GM13977 (cell line): ENCODE measurements at regions of chr19 and their contacts with region 1.

Region 1: DNA sequence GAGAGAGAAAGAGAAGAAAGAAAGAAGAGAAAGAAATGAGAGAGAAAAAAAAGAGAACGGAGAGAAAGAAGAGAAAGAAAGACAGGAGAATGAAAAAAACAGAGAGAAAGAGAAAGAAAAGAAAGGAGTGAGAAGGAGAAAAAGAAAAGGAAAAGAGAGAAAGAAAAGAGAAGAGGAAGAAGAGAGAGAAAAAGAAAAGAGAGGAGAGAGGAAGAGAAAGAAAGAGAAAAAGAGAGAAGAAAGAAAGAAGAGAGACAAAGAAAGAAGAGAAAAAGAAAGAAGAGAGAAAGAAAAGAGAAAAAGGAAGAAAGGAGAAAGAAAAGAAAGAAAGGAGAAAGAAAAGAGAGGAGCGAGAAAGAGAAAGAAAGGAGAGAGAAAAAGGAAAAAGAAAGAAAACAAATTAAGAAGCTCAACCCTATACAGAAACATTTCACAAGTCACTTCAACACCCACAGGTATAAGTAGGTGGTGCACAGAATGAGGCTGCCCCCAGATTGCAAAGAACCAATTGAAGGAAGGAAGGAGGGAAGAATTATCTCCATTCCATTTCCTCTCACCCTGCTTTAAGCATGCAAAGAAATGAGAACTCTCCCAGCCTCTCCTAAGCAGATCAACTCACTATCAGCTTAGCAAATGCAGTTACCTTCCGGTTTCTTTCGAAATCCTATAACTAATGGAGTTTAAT is 98.8 kb upstream of the CACNA1A start:
- DNase-seq: no peak
- CTCF ChIP-seq: no peak

Region 2: DNA sequence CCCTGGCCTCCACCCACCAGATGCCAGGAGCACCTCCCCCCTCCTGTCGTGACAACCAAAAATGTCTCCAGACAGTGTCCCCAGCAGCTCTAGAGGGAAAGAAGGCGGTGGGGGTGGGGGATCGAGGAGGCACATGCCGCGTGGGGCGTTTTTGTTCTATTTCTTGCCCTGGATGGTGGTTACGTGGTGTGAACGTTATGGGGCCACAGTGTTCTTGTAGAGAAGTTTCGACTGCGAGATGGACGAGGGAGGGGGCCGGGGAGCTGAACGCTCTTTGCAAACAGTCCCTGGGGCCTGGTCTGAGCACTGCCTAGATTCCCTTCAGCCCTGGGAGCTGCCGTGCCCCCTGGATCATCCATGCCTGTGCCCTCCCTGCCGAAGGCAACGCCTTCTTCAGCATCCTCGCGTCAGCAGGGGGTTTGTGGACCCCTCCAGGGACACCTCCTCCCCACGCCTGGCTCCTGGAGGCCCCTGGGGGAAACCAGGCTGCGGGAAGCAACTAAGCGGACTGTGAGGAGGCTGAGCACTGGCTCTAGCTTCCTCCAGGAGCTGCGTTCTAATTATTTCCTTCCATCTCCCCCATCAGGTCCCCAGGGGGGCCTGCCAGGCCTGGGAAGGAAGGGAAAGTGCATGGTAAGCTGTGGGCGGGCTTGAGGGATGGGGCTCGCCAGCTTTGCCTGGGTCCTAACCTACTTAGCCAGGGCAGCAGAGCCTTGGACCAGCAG is 323.3 kb before region 1 on chr19:
- in situ Hi-C with region 1: no loop called
- DNase-seq: no peak
- CTCF ChIP-seq: no peak

Region 3: GRCh38 chr19:13872695-13873389 is 267.8 kb after region 1 on chr19:
- in situ Hi-C with region 1: loop called (anchors 10 kb)
- DNase-seq: peak; percentile 83
- CTCF ChIP-seq: peak; percentile 54